SK-N-SH (cell line): ENCODE measurements at regions of chr11 and their contacts with region 1.

Region 1: GRCh38 chr11:7665473-7666291 is 7.6 kb downstream of the CYB5R2 start:
- DNase-seq: peak; percentile 90
- H3K4me3 ChIP-seq: no peak overlapping the region; a peak in 1 of 4 replicates
- H3K27ac ChIP-seq: no peak overlapping the region
- H3K4me1 ChIP-seq: peaks cover 0 to 2% of the 10 kb centered on the region in 2 experiments; a peak in 1 of 4 replicates
- H3K27me3 ChIP-seq: no peaks in the 10 kb centered on the region
- CTCF ChIP-seq: peak; percentile 79
- EP300 ChIP-seq: no peak
- RAD21 ChIP-seq: peak; percentile 93

Region 2: DNA sequence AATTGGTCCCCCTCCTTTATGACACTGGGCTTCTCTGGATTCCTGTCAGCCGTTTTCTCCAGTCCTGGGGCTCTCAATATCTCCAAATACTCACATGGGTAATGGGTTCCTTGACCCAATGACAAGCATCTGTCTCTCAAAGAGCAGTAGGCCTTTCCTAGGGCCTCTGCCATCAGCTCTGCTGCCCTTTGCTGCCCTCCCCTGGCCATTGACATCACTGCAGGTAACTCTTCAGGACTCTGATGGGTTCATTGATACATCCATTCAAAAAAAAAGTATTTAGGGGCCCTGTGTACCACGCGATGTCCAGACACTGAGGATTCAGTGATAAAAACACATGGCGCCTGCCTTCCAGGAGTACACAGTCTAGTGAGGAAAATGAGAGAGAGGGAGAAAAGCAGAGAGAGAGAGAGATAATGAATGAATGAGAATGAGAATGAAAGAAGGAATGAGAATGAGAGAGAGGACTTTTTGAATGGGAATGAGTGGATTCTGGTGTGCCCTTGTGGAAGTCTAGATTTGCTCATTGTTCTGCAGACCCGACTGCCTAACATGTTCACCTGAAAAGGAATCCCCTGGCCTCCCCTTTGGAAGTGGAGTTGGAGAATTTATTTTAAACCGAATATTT is 223.0 kb before region 1 on chr11:
- CTCF ChIA-PET with region 1: interaction called, 15 read pairs
- POLR2A ChIA-PET with region 1: no interaction called
- DNase-seq: peak; percentile 67
- H3K4me3 ChIP-seq: peak overlapping the region in 1 of 2 experiments; percentile 19; a peak in 1 of 4 replicates
- H3K27ac ChIP-seq: no peak overlapping the region
- H3K4me1 ChIP-seq: no peaks in the 10 kb centered on the region
- H3K27me3 ChIP-seq: no peaks in the 10 kb centered on the region
- CTCF ChIP-seq: peak; percentile 87
- EP300 ChIP-seq: no peak
- RAD21 ChIP-seq: peak; percentile 94

Region 3: GRCh38 chr11:7513234-7514098 is 152.2 kb before region 1 on chr11 and contains the start of gene PPFIBP2:
- CTCF ChIA-PET with region 1: interaction called, 74 read pairs
- POLR2A ChIA-PET with region 1: no interaction called
- DNase-seq: peak; percentile 96
- H3K4me3 ChIP-seq: peak within 1 kb of the TSS; percentile 63 to 76
- H3K27ac ChIP-seq: peak within 1 kb of the TSS in 1 of 2 experiments; percentile 60; a peak in 1 of 4 replicates
- H3K4me1 ChIP-seq: peaks cover 0 to 18% of the 10 kb centered on the region in 2 experiments; a peak in 1 of 4 replicates
- H3K27me3 ChIP-seq: peaks cover 9% of the 10 kb centered on the region
- CTCF ChIP-seq: peak; percentile 79
- EP300 ChIP-seq: no peak
- RAD21 ChIP-seq: peak; percentile 69
- polyA plus RNA-seq, gene PPFIBP2: 0.67 and 1.1 TPM in 2 replicates

Region 4: GRCh38 chr11:7548659-7549274 is 116.9 kb before region 1 on chr11:
- CTCF ChIA-PET with region 1: interaction called, 23 read pairs
- POLR2A ChIA-PET with region 1: no interaction called
- DNase-seq: no peak
- H3K4me3 ChIP-seq: no peak overlapping the region
- H3K27ac ChIP-seq: no peak overlapping the region
- H3K4me1 ChIP-seq: peaks cover 0 to 4% of the 10 kb centered on the region in 2 experiments; a peak in 1 of 4 replicates
- H3K27me3 ChIP-seq: no peaks in the 10 kb centered on the region; the same call in 1 of the 2 replicates
- CTCF ChIP-seq: peak; percentile 14; the same call in 1 of the 2 replicates
- EP300 ChIP-seq: no peak
- RAD21 ChIP-seq: no peak

Region 5: DNA sequence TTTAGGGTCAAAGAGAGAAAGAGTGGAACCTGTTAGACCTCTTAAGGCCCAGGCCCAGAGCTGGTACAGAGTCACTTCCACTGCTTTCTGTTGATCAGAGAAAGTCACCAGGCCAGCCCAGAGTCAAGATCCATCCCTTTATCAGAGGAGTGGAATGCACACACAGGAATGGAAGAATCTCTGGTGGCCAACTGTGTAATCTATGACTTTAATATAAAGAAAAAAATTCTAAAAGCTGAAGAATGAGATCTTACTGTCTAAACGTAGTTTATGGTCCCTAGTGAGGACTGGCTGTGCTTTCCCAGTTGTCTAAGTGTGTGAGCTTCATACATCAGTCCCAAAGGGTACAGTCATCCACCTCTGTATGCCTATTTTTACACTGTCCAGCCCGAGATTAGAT is 100.9 kb before region 1 on chr11:
- CTCF ChIA-PET with region 1: interaction called, 256 read pairs
- POLR2A ChIA-PET with region 1: no interaction called
- DNase-seq: no peak
- H3K4me3 ChIP-seq: no peak overlapping the region
- H3K27ac ChIP-seq: no peak overlapping the region
- H3K4me1 ChIP-seq: peaks cover 0 to 12% of the 10 kb centered on the region in 2 experiments; a peak in 2 of 4 replicates
- H3K27me3 ChIP-seq: peaks cover 17% of the 10 kb centered on the region; the same call in 1 of the 2 replicates
- CTCF ChIP-seq: no peak
- EP300 ChIP-seq: no peak
- RAD21 ChIP-seq: no peak

Region 6: GRCh38 chr11:7642742-7643141 is 22.9 kb before region 1 on chr11:
- CTCF ChIA-PET with region 1: interaction called, 11 read pairs
- POLR2A ChIA-PET with region 1: no interaction called
- DNase-seq: no peak
- H3K4me3 ChIP-seq: no peak overlapping the region
- H3K27ac ChIP-seq: no peak overlapping the region
- H3K4me1 ChIP-seq: no peaks in the 10 kb centered on the region
- H3K27me3 ChIP-seq: no peaks in the 10 kb centered on the region
- CTCF ChIP-seq: no peak
- EP300 ChIP-seq: no peak
- RAD21 ChIP-seq: no peak

Region 7: GRCh38 chr11:7688238-7688826 is 22.6 kb after region 1 on chr11:
- CTCF ChIA-PET with region 1: interaction called, 17 read pairs
- POLR2A ChIA-PET with region 1: no interaction called
- DNase-seq: peak; percentile 52
- H3K4me3 ChIP-seq: no peak overlapping the region; a peak in 1 of 4 replicates
- H3K27ac ChIP-seq: no peak overlapping the region
- H3K4me1 ChIP-seq: no peaks in the 10 kb centered on the region
- H3K27me3 ChIP-seq: peaks cover 21% of the 10 kb centered on the region; the same call in 1 of the 2 replicates
- CTCF ChIP-seq: peak; percentile 80
- EP300 ChIP-seq: no peak
- RAD21 ChIP-seq: peak; percentile 69